ENCODE measurements at regions of chr2 and their contacts with region 1.

Region 1: DNA sequence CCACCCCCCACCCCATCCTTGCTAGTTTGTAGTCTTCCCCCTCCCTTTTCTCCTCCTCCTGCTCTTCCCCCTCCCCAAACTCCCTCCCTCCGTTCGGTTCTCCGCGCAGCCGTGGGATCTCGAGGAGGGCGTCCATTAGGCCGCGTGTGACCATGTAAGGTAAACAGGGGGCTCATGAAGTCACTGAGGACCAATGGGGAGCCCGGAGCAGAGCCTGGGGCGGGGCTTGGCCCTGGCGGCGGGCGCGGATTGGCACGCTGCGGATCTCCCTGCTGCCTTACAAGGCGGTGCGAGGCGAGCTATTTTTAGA is 246 bp upstream of the KLF7 start:
- DNase-seq: peak; percentile 100
- H3K4me3 ChIP-seq: peak overlapping the region; percentile 83 to 88
- H3K27ac ChIP-seq: peak overlapping the region; percentile 100
- H3K4me1 ChIP-seq: peaks cover 30% of the 10 kb centered on the region
- H3K27me3 ChIP-seq: no peaks in the 10 kb centered on the region
- CTCF ChIP-seq: no peak
- POLR2A ChIP-seq: no peak

Region 2: DNA sequence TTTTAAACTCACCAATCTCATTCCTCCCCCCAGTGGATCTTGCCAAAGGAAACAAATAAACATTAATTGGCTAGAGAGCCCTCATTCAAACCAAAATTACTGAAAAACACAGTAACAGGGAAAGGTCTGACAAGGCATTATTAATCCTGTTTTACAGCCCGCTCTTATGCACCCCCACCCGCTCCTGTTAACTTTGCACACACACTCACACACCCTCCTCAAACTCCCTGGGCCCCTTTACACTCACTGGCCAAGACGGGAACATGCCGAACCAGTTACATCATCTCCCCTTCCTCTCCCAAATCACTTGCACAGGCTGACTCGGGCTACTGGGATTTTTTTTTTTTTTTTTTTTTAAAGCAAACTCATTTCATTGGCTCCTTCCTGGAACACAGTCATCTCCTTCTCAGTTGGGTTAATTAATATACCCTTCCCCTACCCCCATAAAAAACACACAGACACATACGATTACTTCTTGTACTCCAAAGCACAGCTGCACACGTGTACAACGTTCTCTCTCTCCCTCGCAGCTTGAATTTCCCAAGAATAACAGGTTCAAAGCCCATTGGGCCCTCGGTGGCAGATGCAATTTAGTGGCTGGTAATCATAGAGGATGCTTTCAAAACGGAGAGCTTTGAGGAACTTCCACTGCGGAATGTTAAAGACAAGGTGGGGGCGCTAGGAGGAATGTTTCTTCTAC is 32.0 kb before region 1 on chr2:
- intact Hi-C with region 1: loop called (anchors 5 kb)
- DNase-seq: peak in 1 of 2 donors; percentile 94
- H3K4me3 ChIP-seq: no peak overlapping the region
- H3K27ac ChIP-seq: peak overlapping the region; percentile 72
- H3K4me1 ChIP-seq: peaks cover 62% of the 10 kb centered on the region
- H3K27me3 ChIP-seq: no peaks in the 10 kb centered on the region
- CTCF ChIP-seq: no peak
- POLR2A ChIP-seq: no peak

Region 3: GRCh38 chr2:207230261-207231105 is 64.5 kb after region 1 on chr2:
- intact Hi-C with region 1: loop called (anchors 10 kb)
- DNase-seq: no peak
- H3K4me3 ChIP-seq: no peak overlapping the region
- H3K27ac ChIP-seq: no peak overlapping the region
- H3K4me1 ChIP-seq: peaks cover 17% of the 10 kb centered on the region
- H3K27me3 ChIP-seq: no peaks in the 10 kb centered on the region
- CTCF ChIP-seq: peak in 1 of 3 experiments; percentile 17
- POLR2A ChIP-seq: no peak

Region 4: GRCh38 chr2:207258263-207258991 is 92.4 kb after region 1 on chr2:
- intact Hi-C with region 1: no loop called
- DNase-seq: no peak
- H3K4me3 ChIP-seq: no peak overlapping the region
- H3K27ac ChIP-seq: peak overlapping the region; percentile 42
- H3K4me1 ChIP-seq: peaks cover 26% of the 10 kb centered on the region
- H3K27me3 ChIP-seq: no peaks in the 10 kb centered on the region
- CTCF ChIP-seq: no peak
- POLR2A ChIP-seq: no peak

Region 5: DNA sequence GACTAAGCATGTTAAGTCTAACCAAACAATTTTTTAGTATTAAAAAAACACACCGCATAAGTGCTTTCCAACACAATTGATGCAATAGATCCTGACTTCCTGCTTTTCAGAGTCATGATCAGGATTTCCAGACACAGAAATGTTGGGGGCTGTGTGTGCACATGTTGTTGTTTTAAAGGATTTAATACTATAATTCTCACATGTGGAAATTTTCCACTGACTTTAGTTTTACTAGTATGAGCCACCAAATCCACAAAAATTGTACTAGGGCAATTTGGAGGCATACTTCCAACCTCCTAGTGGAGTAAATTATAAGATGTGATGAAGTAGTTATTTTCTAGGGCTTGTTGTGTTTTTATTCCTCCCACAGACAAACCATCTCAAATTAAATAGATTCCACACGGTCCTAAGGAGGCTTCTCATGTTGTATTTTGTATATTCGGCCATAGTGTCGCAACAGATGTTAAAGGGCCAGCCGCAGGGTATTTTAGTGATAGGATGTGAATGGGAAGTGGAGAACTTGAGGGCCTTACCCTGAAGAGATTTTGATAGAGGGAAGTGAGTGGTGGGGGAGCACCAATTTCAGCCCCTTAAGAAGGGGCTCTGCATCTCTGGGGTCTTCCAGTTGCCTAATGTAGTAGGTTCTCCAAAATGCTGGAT is 108.7 kb after region 1 on chr2:
- intact Hi-C with region 1: no loop called
- DNase-seq: no peak
- H3K4me3 ChIP-seq: no peak overlapping the region
- H3K27ac ChIP-seq: no peak overlapping the region
- H3K4me1 ChIP-seq: no peaks in the 10 kb centered on the region
- H3K27me3 ChIP-seq: no peaks in the 10 kb centered on the region
- CTCF ChIP-seq: no peak
- POLR2A ChIP-seq: no peak

Region 6: GRCh38 chr2:207334624-207335371 is 168.8 kb after region 1 on chr2:
- intact Hi-C with region 1: loop called (anchors 10 kb)
- DNase-seq: no peak
- H3K4me3 ChIP-seq: peak overlapping the region; percentile 22 to 31
- H3K27ac ChIP-seq: peak overlapping the region; percentile 76
- H3K4me1 ChIP-seq: peaks cover 24% of the 10 kb centered on the region
- H3K27me3 ChIP-seq: no peaks in the 10 kb centered on the region
- CTCF ChIP-seq: no peak
- POLR2A ChIP-seq: no peak

Region 7: DNA sequence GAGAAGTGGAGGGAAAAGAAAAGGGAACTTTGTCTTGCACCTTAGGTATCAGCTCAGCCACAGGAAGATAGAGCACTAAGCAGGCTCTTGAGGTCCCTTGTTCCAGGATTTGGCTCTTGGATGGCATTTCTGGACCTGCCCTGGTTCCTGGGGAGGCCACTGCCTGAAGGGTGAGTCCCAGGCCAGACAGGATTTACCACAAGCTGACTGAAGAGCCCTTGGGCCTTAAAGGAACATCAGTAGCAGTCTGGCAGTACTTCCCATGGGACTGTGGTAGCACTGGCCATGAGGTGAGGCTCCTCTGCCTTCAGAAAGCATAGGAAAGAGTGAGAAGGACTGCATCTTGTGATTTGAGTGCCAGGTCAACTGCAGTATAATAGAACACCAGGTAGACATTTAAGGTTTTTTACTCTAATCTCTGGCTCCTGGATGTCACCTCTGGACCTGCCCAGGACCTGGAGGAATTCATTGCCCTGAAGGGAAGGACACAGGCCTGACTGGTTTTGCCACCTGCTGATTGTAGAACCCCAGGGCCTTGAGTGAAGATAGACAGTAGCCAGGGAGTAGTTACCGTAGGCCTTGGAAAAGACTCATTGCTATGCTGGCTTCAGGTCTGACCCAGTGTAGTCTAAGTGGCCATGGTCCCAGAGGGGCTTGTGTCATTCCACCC is 209.3 kb after region 1 on chr2:
- intact Hi-C with region 1: no loop called
- DNase-seq: no peak
- H3K4me3 ChIP-seq: no peak overlapping the region
- H3K27ac ChIP-seq: no peak overlapping the region
- H3K4me1 ChIP-seq: no peaks in the 10 kb centered on the region
- H3K27me3 ChIP-seq: no peaks in the 10 kb centered on the region
- CTCF ChIP-seq: no peak
- POLR2A ChIP-seq: no peak